ENCODE measurements at regions of chr12 and their contacts with region 1.

Region 1: DNA sequence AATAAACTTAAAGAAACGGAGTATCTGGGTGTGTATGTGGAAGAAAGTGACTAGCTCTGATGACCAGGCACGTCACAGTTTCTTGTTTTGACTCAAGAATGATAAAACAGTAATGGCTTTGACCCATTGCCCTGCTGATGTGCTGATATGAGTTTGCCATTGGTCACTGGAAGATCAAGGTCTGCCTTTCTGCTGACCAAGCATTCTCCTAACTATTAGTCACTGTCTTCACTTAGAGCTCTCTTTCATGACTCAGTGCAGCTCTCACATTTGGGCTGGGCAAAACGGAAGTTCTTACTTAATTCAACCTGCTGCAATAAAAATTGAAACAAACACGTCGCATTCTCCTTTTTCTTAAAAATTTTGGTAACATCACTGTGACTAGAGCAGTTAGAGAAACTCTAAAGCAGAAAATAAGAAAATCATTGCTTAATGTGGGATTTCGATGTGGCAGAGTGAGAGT is 366.7 kb downstream of the BTG1 start:
- DNase-seq: peak; percentile 77
- H3K4me3 Mint-ChIP-seq: peak overlapping the region; percentile 58
- H3K27ac Mint-ChIP-seq: peak overlapping the region; percentile 73
- H3K4me1 Mint-ChIP-seq: peaks cover 22% of the 10 kb centered on the region
- H3K27me3 Mint-ChIP-seq: peaks cover 2% of the 10 kb centered on the region

Region 2: GRCh38 chr12:91172096-91172495 is 606.9 kb before region 1 on chr12:
- intact Hi-C with region 1: no loop called
- DNase-seq: no peak
- H3K4me3 Mint-ChIP-seq: no peak overlapping the region
- H3K27ac Mint-ChIP-seq: no peak overlapping the region
- H3K4me1 Mint-ChIP-seq: no peaks in the 10 kb centered on the region
- H3K27me3 Mint-ChIP-seq: no peaks in the 10 kb centered on the region

Region 3: GRCh38 chr12:92136965-92137721 is 358.2 kb after region 1 on chr12:
- intact Hi-C with region 1: loop called (anchors 2 kb)
- DNase-seq: peak; percentile 60
- H3K4me3 Mint-ChIP-seq: peak overlapping the region; percentile 99
- H3K27ac Mint-ChIP-seq: peak overlapping the region; percentile 82
- H3K4me1 Mint-ChIP-seq: peaks cover 66% of the 10 kb centered on the region
- H3K27me3 Mint-ChIP-seq: no peaks in the 10 kb centered on the region